ENCODE measurements at regions of chr18 and their contacts with region 1.

Region 1: DNA sequence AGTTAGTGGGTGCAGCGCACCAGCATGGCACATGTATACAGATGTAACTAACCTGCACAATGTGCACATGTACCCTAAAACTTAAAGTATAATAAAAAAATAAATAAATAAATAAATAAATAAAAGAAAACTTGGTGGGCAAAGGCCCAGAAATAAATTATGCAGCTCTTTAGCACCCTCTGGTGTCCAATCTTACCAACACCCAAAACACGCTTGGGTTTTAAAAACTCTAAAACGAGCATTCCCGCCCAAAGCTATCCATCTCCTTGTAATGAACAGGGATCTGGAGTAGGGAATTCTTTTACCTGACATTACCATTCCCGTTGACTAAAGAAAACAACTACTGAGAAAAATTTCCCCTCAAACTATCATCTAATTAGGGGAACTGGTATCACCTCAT is 2005.9 kb upstream of the CELF4 start:
- DNase-seq: peak; percentile 30
- H3K4me3 Mint-ChIP-seq: no peak overlapping the region
- H3K27ac Mint-ChIP-seq: no peak overlapping the region
- H3K4me1 Mint-ChIP-seq: no peaks in the 10 kb centered on the region
- H3K27me3 Mint-ChIP-seq: no peaks in the 10 kb centered on the region
- CTCF ChIP-seq: peak; percentile 35

Region 2: DNA sequence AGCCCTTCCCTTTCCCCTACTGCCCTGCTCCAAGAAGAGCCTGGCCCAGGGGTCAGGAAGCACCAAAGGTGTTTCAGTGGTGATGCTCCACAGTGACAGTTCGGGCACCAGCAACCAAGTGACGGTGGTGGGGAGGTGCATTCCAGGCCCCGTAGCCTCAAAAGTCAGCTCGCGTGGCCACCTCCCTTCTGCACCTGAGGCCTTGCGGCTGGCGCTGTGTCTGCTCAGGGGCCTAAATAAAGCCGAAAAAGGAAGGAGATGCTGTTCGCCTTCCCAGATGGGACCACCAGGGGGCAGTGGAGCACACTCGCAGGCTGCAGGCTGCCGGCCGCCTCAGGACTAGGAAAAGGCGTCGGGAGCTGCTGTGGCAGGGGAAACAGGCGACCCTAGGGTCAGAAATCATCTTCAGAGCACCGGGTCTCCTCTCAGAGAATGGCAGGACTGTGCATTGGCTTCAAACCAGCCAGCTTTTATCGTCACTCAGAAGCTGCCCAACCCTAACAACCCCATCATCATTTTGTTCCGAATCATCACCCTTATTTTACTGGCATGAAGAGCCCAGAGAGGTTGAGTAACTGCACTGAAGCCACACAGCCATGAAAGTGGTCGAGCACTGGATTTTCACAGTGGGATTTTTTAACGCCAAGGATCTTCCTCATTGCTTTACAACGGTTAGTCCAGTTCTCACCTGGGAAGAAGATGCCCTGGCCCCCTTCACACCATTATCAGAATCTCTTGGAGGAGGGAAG is 1792.9 kb before region 1 on chr18:
- CTCF ChIA-PET with region 1: interaction called, 4 read pairs
- POLR2A ChIA-PET with region 1: no interaction called
- intact Hi-C with region 1: loop called (anchors 5 kb)
- DNase-seq: peak; percentile 59
- H3K4me3 Mint-ChIP-seq: no peak overlapping the region
- H3K27ac Mint-ChIP-seq: no peak overlapping the region
- H3K4me1 Mint-ChIP-seq: no peaks in the 10 kb centered on the region
- H3K27me3 Mint-ChIP-seq: peaks cover 21% of the 10 kb centered on the region
- CTCF ChIP-seq: peak; percentile 81

Region 3: DNA sequence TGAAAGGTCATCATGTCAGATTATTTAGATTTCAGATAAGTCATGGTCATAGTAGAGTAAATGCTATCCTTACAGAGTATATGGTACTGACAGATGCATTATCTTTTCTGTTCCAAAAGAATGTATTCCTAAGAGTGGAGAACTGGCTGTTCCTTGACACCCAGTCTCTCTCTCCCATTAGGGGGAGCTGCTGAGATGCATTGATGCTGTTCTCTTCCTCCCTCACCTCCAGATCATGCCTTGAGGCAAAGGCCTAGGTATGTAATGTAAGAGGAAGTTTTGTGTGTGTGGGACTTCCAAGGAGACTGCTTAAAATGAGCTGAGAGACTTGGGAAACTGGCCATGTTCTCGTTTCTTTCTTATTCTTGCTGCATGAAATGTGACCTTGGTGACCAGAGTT is 1026.4 kb before region 1 on chr18:
- CTCF ChIA-PET with region 1: no interaction called
- POLR2A ChIA-PET with region 1: no interaction called
- intact Hi-C with region 1: loop called (anchors 5 kb)
- DNase-seq: peak; percentile 81
- H3K4me3 Mint-ChIP-seq: no peak overlapping the region
- H3K27ac Mint-ChIP-seq: no peak overlapping the region
- H3K4me1 Mint-ChIP-seq: no peaks in the 10 kb centered on the region
- H3K27me3 Mint-ChIP-seq: no peaks in the 10 kb centered on the region
- CTCF ChIP-seq: peak; percentile 34

Region 4: DNA sequence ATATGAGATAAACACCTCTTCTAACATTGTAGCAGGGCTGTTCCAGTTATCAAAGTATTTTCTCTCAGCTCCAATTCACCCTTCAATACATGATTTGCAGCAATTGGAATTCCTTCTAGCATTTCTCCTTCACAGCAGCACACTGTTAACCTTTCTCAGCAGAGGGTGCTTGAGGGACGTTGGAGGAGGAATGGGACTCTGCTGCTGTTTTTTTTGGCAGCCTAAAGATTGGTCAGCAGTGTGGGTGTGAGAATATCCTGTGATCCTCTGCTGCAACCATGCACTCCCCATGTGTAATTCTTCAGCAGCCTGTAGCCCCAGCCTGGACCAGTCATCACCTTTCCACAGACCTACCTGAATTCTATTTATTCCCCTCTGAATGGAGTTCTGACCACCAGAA is 297.0 kb before region 1 on chr18:
- CTCF ChIA-PET with region 1: no interaction called
- POLR2A ChIA-PET with region 1: no interaction called
- intact Hi-C with region 1: loop called (anchors 5 kb)
- DNase-seq: peak; percentile 59
- H3K4me3 Mint-ChIP-seq: no peak overlapping the region
- H3K27ac Mint-ChIP-seq: no peak overlapping the region
- H3K4me1 Mint-ChIP-seq: peaks cover 7% of the 10 kb centered on the region
- H3K27me3 Mint-ChIP-seq: no peaks in the 10 kb centered on the region
- CTCF ChIP-seq: no peak

Region 5: GRCh38 chr18:39555496-39555895 is 16.0 kb before region 1 on chr18:
- CTCF ChIA-PET with region 1: no interaction called
- POLR2A ChIA-PET with region 1: no interaction called
- intact Hi-C with region 1: no loop called
- DNase-seq: no peak
- H3K4me3 Mint-ChIP-seq: no peak overlapping the region
- H3K27ac Mint-ChIP-seq: no peak overlapping the region
- H3K4me1 Mint-ChIP-seq: no peaks in the 10 kb centered on the region
- H3K27me3 Mint-ChIP-seq: no peaks in the 10 kb centered on the region
- CTCF ChIP-seq: no peak